HAP-1 (cell line): ENCODE measurements at regions of chr16 and their contacts with region 1.

Region 1: GRCh38 chr16:48353565-48354163 is 31.5 kb downstream of the SIAH1 start:
- DNase-seq: peak; percentile 64 to 75
- H3K4me3 ChIP-seq: no peak overlapping the region
- H3K4me1 ChIP-seq: no peaks in the 10 kb centered on the region
- H3K27me3 ChIP-seq: no peaks in the 10 kb centered on the region

Region 2: GRCh38 chr16:48511071-48511540 is 157.4 kb after region 1 on chr16:
- in situ Hi-C with region 1: loop called (anchors 10 kb)
- DNase-seq: peak in 1 of 2 experiments; percentile 22
- H3K4me3 ChIP-seq: no peak overlapping the region
- H3K4me1 ChIP-seq: peaks cover 13% of the 10 kb centered on the region
- H3K27me3 ChIP-seq: no peaks in the 10 kb centered on the region

Region 3: GRCh38 chr16:48623304-48624016 is 269.8 kb after region 1 on chr16:
- in situ Hi-C with region 1: loop called (anchors 10 kb)
- DNase-seq: peak; percentile 79 to 86
- H3K4me3 ChIP-seq: peak overlapping the region; percentile 31
- H3K4me1 ChIP-seq: peaks cover 7% of the 10 kb centered on the region
- H3K27me3 ChIP-seq: no peaks in the 10 kb centered on the region